ENCODE measurements at regions of chr13 and their contacts with region 1.

Region 1: DNA sequence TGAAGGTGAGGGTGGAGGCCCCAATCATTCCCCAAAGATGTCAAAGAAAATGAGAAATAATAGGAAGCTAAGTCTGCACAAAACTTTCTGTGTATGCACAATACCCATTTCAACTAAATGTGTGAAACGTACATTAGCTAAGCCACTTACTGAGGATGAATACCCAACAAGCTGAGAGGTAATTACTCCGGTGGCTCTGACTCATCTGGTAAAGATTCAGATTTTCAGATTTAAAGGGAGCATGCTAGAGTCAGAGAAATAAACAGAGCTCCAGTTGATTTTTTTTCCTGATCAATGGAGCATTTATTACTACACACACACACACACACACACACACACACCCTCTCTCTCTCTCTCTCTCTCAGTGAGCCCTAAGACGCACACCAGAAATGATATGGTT is 194.8 kb upstream of the ARGLU1 start:
- DNase-seq: no peak
- ATAC-seq: no peak
- H3K4me3 ChIP-seq: no peak overlapping the region
- H3K27ac ChIP-seq: no peak overlapping the region
- H3K4me1 ChIP-seq: no peaks in the 10 kb centered on the region
- H3K27me3 ChIP-seq: no peaks in the 10 kb centered on the region
- CTCF ChIP-seq: no peak
- POLR2A ChIP-seq: no peak

Region 2: GRCh38 chr13:106810069-106810468 is 47.4 kb after region 1 on chr13:
- in situ Hi-C with region 1: no loop called
- intact Hi-C with region 1: loop called (anchors 2 kb)
- DNase-seq: no peak
- ATAC-seq: no peak
- H3K4me3 ChIP-seq: no peak overlapping the region
- H3K27ac ChIP-seq: no peak overlapping the region
- H3K4me1 ChIP-seq: no peaks in the 10 kb centered on the region
- H3K27me3 ChIP-seq: no peaks in the 10 kb centered on the region
- CTCF ChIP-seq: no peak
- POLR2A ChIP-seq: no peak

Measured in gastrocnemius medialis (tissue), 4 donors.